ENCODE measurements at regions of chr3 and their contacts with region 1.

Region 1: DNA sequence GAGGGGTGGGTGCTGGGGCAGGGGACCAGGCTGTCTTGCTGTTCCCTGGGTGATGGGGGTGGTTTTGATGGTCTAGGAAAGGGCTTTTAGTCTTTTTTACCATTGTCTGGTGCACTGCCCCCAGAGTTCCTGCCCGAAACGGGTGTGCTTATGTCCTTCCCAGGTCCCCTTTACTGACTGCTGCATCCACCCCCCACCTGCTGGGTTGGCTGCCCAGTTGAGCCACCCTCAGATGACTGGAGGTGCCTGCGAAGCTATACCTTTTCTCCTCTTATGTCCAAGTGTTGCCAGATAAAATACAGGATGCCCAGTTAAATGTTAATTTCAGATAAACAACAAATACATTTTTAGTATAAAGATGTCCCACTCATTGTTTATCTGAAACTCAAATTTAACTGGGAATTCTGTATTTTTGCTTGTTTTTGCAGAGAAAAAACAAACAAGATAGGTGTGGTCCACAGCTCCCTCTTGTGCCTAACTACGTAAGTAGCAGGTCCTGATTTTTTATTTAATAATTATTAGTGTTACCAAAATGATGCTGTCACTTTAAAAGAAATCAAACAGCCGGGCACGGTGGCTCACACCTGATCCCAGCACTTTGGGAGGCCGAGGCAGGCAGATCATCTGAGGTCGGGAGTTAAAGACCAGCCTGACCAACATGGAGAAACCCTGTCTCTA is 6.1 kb upstream of the RPP14 start:
- DNase-seq: no peak
- H3K4me3 ChIP-seq: no peak overlapping the region
- H3K27ac ChIP-seq: no peak overlapping the region
- H3K4me1 ChIP-seq: no peaks in the 10 kb centered on the region
- H3K27me3 ChIP-seq: peaks cover 0 to 3% of the 10 kb centered on the region in 2 donors
- CTCF ChIP-seq: peak in 2 of 3 donors; percentile 50 to 65
- POLR2A ChIP-seq: no peak

Region 2: DNA sequence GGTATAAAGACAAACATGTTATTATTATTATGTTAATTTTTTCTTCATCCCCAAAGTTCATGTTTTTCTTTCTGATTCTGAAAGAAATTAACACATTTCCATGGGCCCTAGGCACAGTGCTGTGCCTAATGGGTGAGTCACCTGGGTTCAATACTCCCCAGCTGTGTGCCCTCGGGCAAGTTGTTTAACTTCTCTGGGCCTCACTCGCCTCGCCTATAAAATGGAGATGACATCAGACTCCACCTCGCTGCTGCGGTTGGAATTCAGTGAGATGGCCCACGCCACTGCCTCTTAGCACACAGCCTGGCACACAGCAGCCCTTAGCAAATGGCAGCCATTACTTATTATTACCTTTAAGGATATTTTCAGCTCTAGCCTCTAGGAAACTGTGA is 111.8 kb before region 1 on chr3:
- intact Hi-C with region 1: loop called (anchors 10 kb)
- DNase-seq: no peak
- H3K4me3 ChIP-seq: no peak overlapping the region
- H3K27ac ChIP-seq: peak overlapping the region in 1 of 2 donors; percentile 16
- H3K4me1 ChIP-seq: no peaks in the 10 kb centered on the region
- H3K27me3 ChIP-seq: no peaks in the 10 kb centered on the region
- CTCF ChIP-seq: no peak
- POLR2A ChIP-seq: no peak

Region 3: DNA sequence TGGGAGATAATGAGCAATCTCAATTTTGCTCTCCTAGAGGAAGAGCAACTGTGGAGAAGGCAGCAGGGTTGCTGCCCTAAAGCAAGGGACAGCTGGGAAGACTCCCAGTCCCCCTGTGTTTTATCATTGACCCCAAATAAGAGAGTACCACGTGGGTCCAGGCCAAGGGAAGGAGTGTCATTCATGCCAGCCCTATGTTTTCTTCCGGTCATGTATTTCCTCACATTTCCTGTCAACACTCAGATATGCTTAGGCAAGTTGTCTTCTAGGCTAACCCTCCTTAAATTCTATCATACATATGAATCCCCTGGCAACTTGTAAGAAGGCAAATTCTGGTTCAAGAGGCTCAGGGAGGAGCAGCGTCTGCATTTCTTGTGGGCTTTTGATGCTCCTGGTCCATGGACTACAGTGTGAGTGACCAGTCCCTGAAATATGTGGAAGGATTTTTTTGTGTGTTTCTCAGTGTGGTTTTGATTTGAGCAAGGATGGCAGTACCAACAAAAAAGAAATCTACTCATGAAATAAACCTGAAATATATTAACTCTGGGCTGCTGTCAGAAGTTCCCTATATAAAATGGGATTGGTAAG is 25.9 kb before region 1 on chr3:
- intact Hi-C with region 1: no loop called
- DNase-seq: no peak
- H3K4me3 ChIP-seq: no peak overlapping the region
- H3K27ac ChIP-seq: no peak overlapping the region
- H3K4me1 ChIP-seq: no peaks in the 10 kb centered on the region
- H3K27me3 ChIP-seq: no peaks in the 10 kb centered on the region
- CTCF ChIP-seq: no peak
- POLR2A ChIP-seq: no peak

Region 4: DNA sequence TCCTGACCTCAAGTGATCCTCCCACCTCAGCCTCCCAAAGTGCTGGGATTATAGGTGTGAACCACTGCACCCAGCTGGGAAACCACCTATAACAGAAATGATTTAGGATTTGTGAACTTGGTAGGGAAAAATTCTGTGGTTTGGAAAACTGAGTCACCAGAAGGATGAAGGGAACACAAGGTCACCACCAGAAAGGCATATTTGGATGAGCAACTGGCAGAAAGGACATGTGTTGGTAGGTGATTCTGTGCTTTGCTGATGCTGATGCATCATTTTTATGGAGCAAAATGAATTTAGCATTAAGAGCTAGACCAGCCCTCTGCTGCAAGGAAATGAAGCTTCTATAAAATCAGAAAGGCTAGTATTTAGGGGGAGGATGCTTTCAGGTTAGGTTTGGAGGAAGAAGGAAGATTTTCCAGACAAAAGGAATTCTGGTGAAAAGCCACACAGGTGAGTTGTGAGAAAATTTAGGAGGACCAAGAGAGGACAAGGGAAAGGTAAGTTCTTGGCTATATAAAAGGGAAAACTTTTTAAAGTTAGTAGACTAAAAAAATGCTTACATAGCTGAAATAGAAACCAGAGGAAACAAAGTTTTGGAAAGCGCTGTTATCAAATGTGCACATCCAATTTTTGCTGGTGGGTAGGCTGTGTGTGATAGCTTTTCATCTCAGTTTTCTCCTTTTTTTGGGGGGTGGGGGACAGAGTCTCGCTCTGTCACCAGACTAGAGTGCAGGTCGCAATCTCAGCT is 36.3 kb after region 1 on chr3:
- intact Hi-C with region 1: no loop called
- DNase-seq: no peak
- H3K4me3 ChIP-seq: no peak overlapping the region
- H3K27ac ChIP-seq: no peak overlapping the region
- H3K4me1 ChIP-seq: peaks cover 0 to 7% of the 10 kb centered on the region in 2 donors
- H3K27me3 ChIP-seq: no peaks in the 10 kb centered on the region
- CTCF ChIP-seq: no peak
- POLR2A ChIP-seq: no peak

Measured in breast epithelium (tissue), 4 donors.